GM23248 (cell line): ENCODE measurements at regions of chr16 and their contacts with region 1.

Region 1: DNA sequence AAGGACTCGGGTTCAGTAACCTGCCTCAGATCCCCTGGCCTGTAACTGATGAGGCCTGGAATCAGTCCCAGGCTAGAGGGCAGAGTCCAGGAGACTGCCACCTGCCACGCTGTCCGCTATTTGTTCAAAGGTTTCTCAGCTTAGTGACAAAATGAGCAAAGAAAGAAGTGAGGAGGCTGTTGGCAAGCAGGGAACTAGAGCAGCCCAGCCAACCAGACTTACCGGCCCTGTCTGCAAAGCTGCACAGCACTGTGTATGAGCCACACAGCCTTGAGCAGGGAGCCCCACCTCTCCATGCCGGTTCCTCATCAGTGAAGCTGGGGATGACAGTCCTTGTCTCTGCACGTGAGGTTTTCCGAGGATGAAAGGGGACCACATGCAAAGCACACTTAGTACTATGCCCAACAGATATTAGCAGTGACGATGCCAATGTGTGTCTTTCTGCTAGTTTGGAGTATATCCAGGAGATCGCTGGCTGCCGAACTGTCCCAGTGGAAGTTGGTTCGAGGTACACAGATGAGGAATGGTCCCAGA is 11.2 kb downstream of the KDM8 start:
- DNase-seq: no peak
- H3K4me3 ChIP-seq: no peak overlapping the region
- H3K27ac ChIP-seq: no peak overlapping the region
- H3K4me1 ChIP-seq: no peaks in the 10 kb centered on the region
- H3K27me3 ChIP-seq: no peaks in the 10 kb centered on the region

Region 2: DNA sequence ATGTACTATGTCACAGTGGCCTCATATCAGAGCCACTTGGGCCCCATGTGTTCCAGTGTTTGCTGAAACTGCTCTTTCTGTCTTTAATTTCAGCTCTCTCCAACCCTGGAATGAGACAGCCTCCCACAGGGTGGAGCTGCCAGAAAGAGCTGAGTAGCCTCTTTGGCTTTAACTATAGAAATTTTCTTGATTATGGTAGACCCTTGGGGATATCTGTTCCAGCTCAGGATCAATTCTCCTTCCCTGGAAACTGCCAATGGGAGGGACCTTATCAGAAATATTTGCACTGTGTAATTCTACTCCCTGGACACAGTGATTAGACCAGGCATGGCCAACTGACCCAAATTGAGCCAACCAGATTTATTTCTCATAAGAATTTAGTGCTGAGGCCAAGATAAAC is 50.1 kb before region 1 on chr16:
- in situ Hi-C with region 1: loop called (anchors 5 kb)
- DNase-seq: no peak
- H3K4me3 ChIP-seq: no peak overlapping the region
- H3K27ac ChIP-seq: no peak overlapping the region
- H3K4me1 ChIP-seq: no peaks in the 10 kb centered on the region
- H3K27me3 ChIP-seq: no peaks in the 10 kb centered on the region